ENCODE measurements at regions of chr11 and their contacts with region 1.

Region 1: GRCh38 chr11:3091791-3092602 is 34.8 kb upstream of the CARS1 start:
- DNase-seq: peak; percentile 54
- H3K4me3 ChIP-seq: no peak overlapping the region
- H3K27ac ChIP-seq: no peak overlapping the region
- H3K4me1 ChIP-seq: no peaks in the 10 kb centered on the region
- H3K27me3 ChIP-seq: no peaks in the 10 kb centered on the region
- CTCF ChIP-seq: peak; percentile 95 to 99 (median 98)
- POLR2A ChIP-seq: no peak

Region 2: GRCh38 chr11:3037040-3037944 is 54.7 kb before region 1 on chr11:
- intact Hi-C with region 1: loop called (anchors 2 kb)
- DNase-seq: peak; percentile 60
- H3K4me3 ChIP-seq: no peak overlapping the region
- H3K27ac ChIP-seq: no peak overlapping the region
- H3K4me1 ChIP-seq: no peaks in the 10 kb centered on the region
- H3K27me3 ChIP-seq: no peaks in the 10 kb centered on the region
- CTCF ChIP-seq: peak; percentile 25 to 82 (median 73)
- POLR2A ChIP-seq: no peak

Measured in prostate gland (tissue), 2 donors.